ENCODE measurements at regions of chr7 and their contacts with region 1.

Region 1: DNA sequence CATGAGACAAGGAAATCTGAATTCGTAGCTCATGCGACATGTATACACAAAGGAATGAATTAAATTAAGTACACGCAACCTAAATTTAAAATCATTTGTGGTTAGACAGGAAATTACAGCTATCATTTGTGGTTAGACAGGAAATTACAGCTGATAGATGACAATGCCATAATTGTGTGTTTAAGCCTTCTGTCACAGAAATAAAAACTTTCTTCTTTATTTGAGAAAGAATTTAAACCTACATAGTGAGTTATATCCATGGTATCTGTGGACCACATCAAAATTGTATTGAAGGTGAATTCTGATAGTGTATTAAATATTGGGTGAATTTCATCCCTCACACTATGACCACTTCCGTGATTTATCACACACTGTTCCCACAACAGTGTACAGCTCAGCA is 362.9 kb downstream of the MAGI2 start:
- DNase-seq: no peak
- H3K4me3 ChIP-seq: no peak overlapping the region
- H3K4me3 Mint-ChIP-seq: no peak overlapping the region
- H3K27ac ChIP-seq: no peak overlapping the region
- H3K27ac Mint-ChIP-seq: no peak overlapping the region
- H3K4me1 ChIP-seq: peaks cover 0 to 7% of the 10 kb centered on the region in 2 donors
- H3K4me1 Mint-ChIP-seq: peaks cover 4% of the 10 kb centered on the region
- H3K27me3 ChIP-seq: peaks cover 0 to 3% of the 10 kb centered on the region in 2 donors
- H3K27me3 Mint-ChIP-seq: peaks cover 2 to 24% (median 7%) of the 10 kb centered on the region in 3 donors
- CTCF ChIP-seq: no peak

Region 2: GRCh38 chr7:79046061-79046460 is 44.5 kb before region 1 on chr7:
- intact Hi-C with region 1: loop called in 1 of 2 experiments (anchors 10 kb)
- DNase-seq: no peak
- H3K4me3 ChIP-seq: no peak overlapping the region
- H3K4me3 Mint-ChIP-seq: no peak overlapping the region
- H3K27ac ChIP-seq: no peak overlapping the region
- H3K27ac Mint-ChIP-seq: no peak overlapping the region
- H3K4me1 ChIP-seq: no peaks in the 10 kb centered on the region
- H3K4me1 Mint-ChIP-seq: no peaks in the 10 kb centered on the region
- H3K27me3 ChIP-seq: no peaks in the 10 kb centered on the region
- H3K27me3 Mint-ChIP-seq: no peaks in the 10 kb centered on the region
- CTCF ChIP-seq: no peak

Region 3: GRCh38 chr7:79078273-79078672 is 12.3 kb before region 1 on chr7:
- intact Hi-C with region 1: no loop called
- DNase-seq: no peak
- H3K4me3 ChIP-seq: no peak overlapping the region
- H3K4me3 Mint-ChIP-seq: no peak overlapping the region
- H3K27ac ChIP-seq: no peak overlapping the region
- H3K27ac Mint-ChIP-seq: no peak overlapping the region
- H3K4me1 ChIP-seq: no peaks in the 10 kb centered on the region
- H3K4me1 Mint-ChIP-seq: no peaks in the 10 kb centered on the region
- H3K27me3 ChIP-seq: no peaks in the 10 kb centered on the region
- H3K27me3 Mint-ChIP-seq: peaks cover 0 to 5% (median 2%) of the 10 kb centered on the region in 3 donors
- CTCF ChIP-seq: no peak